ENCODE measurements at regions of chr13 and their contacts with region 1.

Region 1: GRCh38 chr13:76293346-76293745 is 592.9 kb downstream of the KCTD12 start:
- DNase-seq: peak; percentile 76
- ATAC-seq: peak; percentile 92
- H3K4me3 ChIP-seq: no peak overlapping the region
- H3K27ac ChIP-seq: peak overlapping the region; percentile 64
- H3K4me1 ChIP-seq: peaks cover 15% of the 10 kb centered on the region
- H3K27me3 ChIP-seq: no peaks in the 10 kb centered on the region
- CTCF ChIP-seq: no peak

Region 2: DNA sequence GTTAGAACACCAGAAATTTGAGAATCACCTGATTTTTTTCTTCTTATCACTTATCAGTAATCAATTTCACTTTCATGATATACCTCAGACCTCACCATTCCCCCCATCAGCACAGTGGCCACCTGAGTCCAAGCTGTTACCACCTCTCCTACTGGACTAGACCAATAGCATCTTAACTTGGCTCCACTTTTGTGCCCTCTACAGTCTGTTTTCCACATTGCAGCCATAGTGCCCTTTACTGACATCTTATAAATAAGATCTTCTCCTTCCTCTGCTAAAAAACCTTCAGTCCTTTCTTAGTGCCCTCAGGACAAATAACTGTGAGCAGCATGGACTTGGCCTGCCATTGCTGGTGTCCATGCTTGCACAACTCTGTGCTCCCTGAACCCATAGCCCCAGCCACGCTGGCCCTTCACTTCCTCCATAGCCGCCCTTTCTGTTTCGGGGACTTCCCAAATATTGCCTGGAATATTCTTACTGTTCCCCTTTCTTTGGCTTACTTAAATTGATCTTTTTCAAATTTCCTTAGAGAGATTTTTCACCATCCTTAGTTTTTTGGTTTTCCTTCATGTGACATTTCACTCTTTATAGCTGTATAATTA is 276.4 kb before region 1 on chr13:
- CTCF ChIA-PET with region 1: no interaction called
- POLR2A ChIA-PET with region 1: no interaction called
- intact Hi-C with region 1: loop called (anchors 5 kb)
- DNase-seq: peak; percentile 67
- ATAC-seq: peak; percentile 18; the same call in 1 of the 2 replicates
- H3K4me3 ChIP-seq: no peak overlapping the region
- H3K27ac ChIP-seq: no peak overlapping the region
- H3K4me1 ChIP-seq: peaks cover 47% of the 10 kb centered on the region
- H3K27me3 ChIP-seq: no peaks in the 10 kb centered on the region
- CTCF ChIP-seq: peak; percentile 64

Region 3: DNA sequence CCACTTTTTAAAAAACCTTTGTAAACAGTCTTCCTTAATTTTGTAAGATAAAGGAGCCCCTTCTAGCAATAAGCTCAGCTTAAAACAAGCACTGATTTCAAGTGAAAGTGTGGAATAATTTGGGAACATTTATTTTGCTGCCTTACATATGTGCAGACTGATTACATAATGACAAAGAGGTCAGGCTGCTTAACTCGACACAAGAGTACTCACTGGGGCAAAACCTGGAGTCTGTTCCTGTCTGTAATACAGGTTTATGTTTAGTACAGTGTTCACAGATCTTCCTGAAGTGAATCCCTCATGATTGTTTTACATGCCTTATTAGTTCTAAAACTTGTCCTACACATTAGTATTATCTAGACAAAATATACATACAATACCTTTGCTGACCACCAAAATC is 47.4 kb before region 1 on chr13:
- CTCF ChIA-PET with region 1: no interaction called
- POLR2A ChIA-PET with region 1: no interaction called
- intact Hi-C with region 1: no loop called
- DNase-seq: no peak
- ATAC-seq: no peak
- H3K4me3 ChIP-seq: no peak overlapping the region
- H3K27ac ChIP-seq: no peak overlapping the region
- H3K4me1 ChIP-seq: no peaks in the 10 kb centered on the region
- H3K27me3 ChIP-seq: peaks cover 6% of the 10 kb centered on the region
- CTCF ChIP-seq: no peak

Region 4: GRCh38 chr13:76769271-76769791 is 476.0 kb after region 1 on chr13:
- CTCF ChIA-PET with region 1: no interaction called
- POLR2A ChIA-PET with region 1: no interaction called
- intact Hi-C with region 1: no loop called
- DNase-seq: no peak
- ATAC-seq: no peak
- H3K4me3 ChIP-seq: no peak overlapping the region
- H3K27ac ChIP-seq: no peak overlapping the region
- H3K4me1 ChIP-seq: no peaks in the 10 kb centered on the region
- H3K27me3 ChIP-seq: no peaks in the 10 kb centered on the region; the same call in 1 of the 2 replicates
- CTCF ChIP-seq: no peak